ENCODE measurements at regions of chr2 and their contacts with region 1.

Region 1: GRCh38 chr2:112749755-112750559 is 14.5 kb downstream of the CKAP2L start:
- DNase-seq: peak in 1 of 2 donors; percentile 25
- ATAC-seq: no peak
- H3K4me3 ChIP-seq: no peak overlapping the region
- H3K27ac ChIP-seq: no peak overlapping the region
- H3K4me1 ChIP-seq: no peaks in the 10 kb centered on the region
- H3K27me3 ChIP-seq: no peaks in the 10 kb centered on the region
- CTCF ChIP-seq: peak; percentile 34 to 75 (median 50)
- POLR2A ChIP-seq: no peak

Region 2: GRCh38 chr2:112597537-112598322 is 152.2 kb before region 1 on chr2:
- in situ Hi-C with region 1: no loop called
- intact Hi-C with region 1: no loop called
- DNase-seq: no peak
- ATAC-seq: no peak
- H3K4me3 ChIP-seq: no peak overlapping the region
- H3K27ac ChIP-seq: no peak overlapping the region
- H3K4me1 ChIP-seq: peaks cover 0 to 3% of the 10 kb centered on the region in 2 donors
- H3K27me3 ChIP-seq: no peaks in the 10 kb centered on the region
- CTCF ChIP-seq: no peak
- POLR2A ChIP-seq: no peak

Region 3: DNA sequence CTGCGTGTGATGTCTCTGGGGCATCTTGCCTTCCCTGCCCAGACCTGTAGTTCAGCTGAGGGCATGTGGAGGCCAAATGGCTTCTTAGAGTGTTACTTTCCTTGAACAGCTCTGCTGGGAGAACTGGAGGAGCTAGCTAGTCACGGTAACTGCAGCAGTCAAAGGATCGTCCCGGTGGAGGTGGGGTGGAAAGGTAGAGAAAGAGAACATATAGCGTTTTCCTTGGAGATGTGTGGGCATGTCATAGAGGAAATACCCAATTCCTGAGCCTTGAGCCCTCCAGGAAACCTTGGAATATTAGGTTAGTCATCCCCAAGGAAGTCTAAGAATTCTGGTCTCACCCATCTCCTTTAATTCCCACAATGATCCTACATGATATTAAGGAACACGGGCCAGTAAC is 127.5 kb after region 1 on chr2:
- in situ Hi-C with region 1: loop called in 1 of 4 experiments (anchors 10 kb)
- intact Hi-C with region 1: no loop called
- DNase-seq: no peak
- ATAC-seq: no peak
- H3K4me3 ChIP-seq: no peak overlapping the region
- H3K27ac ChIP-seq: no peak overlapping the region
- H3K4me1 ChIP-seq: no peaks in the 10 kb centered on the region
- H3K27me3 ChIP-seq: peaks cover 0 to 6% (median 0%) of the 10 kb centered on the region in 3 donors
- CTCF ChIP-seq: no peak
- POLR2A ChIP-seq: no peak

Region 4: DNA sequence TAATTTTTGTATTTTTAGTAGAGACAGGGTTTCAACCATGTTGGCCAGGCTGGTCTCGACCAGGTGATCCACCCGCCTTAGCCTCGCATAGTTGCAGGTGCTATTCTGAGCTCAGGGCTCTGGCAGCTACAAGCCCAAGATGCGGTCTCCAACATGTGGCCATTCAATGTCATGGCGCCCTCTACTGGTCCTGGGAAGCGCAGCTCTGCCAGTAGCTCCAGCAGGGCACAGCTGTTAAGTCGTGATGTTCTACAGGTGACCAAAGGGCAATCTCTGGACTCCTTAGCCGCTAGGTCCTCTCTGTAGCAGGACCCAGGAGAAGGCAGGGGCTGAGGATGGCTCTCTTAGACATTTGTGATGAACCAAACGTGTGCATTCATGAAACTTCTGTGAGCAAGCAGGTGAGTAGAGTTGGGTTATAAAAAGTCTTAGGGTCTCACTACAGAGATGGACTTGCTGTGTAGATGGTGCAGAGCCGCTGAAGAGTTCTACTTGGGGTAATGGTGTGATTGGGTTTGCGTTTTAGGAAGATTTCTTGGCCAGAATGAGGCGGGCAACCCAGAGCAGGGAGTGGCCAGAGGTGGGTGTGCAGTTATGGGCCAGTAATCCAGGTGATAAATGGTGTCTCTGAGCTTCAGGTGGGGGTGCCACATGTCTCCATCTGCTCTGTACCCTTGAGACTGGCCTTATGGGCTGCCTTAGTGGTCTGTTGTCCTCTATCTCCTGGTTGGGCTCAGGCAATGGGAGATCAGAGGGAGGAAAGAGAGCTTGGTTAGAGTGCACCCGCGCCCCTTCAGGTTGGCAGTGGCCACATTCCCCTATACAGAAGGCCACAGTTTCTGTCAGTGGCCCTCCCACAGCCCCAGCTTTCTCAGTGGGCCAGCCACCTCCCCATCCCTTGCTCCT is 192.0 kb after region 1 on chr2:
- in situ Hi-C with region 1: no loop called
- intact Hi-C with region 1: loop called (anchors 5 kb)
- DNase-seq: no peak
- ATAC-seq: no peak
- H3K4me3 ChIP-seq: no peak overlapping the region
- H3K27ac ChIP-seq: no peak overlapping the region
- H3K4me1 ChIP-seq: no peaks in the 10 kb centered on the region
- H3K27me3 ChIP-seq: no peaks in the 10 kb centered on the region
- CTCF ChIP-seq: peak in 2 of 5 experiments; percentile 39 to 55
- POLR2A ChIP-seq: no peak

Region 5: GRCh38 chr2:112958428-112959108 is 208.6 kb after region 1 on chr2:
- in situ Hi-C with region 1: loop called in 1 of 4 experiments (anchors 10 kb)
- intact Hi-C with region 1: no loop called
- DNase-seq: no peak
- ATAC-seq: no peak
- H3K4me3 ChIP-seq: no peak overlapping the region
- H3K27ac ChIP-seq: no peak overlapping the region
- H3K4me1 ChIP-seq: no peaks in the 10 kb centered on the region
- H3K27me3 ChIP-seq: no peaks in the 10 kb centered on the region
- CTCF ChIP-seq: peak in 3 of 5 experiments; percentile 35 to 53 (median 47)
- POLR2A ChIP-seq: no peak

Region 6: DNA sequence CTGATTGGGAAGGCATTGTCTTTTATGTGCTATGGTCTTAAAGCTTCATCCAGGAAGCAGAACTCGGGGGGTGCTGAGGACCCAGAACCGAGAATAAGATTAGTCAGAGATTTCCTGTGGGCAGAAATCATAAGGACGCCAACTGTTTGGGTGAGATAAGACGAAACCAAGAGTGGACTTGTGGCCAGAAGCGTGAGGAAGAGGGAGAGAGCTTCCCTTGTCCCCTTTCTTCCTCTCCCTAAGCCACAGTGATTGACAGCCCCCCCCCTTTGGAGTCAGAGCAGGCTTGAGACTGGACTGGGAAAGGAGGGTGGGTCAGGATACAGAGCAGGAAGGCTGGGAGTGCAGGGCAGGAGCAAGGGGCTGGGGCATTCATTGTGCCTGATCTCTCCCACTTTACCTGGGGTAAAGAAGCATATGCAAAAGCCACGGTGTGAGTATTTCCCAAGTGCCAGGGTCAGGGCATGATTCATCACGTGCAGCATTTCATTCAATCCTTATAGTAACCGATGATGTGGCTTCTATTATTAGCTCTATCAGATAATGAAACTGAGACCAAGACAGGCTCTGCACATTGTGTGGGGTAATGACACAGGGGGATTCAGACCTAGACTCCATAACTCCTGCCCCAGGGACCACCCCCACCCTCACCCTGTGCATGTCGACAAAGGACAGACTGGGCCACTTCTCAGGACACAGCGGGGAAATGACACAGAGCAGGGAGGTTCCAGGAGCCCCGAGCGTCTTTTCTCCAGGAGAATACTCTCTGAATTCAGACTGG is 374.4 kb after region 1 on chr2:
- in situ Hi-C with region 1: no loop called
- intact Hi-C with region 1: no loop called
- DNase-seq: no peak
- ATAC-seq: peak; percentile 65 to 84
- H3K4me3 ChIP-seq: no peak overlapping the region
- H3K27ac ChIP-seq: no peak overlapping the region
- H3K4me1 ChIP-seq: no peaks in the 10 kb centered on the region
- H3K27me3 ChIP-seq: no peaks in the 10 kb centered on the region
- CTCF ChIP-seq: no peak
- POLR2A ChIP-seq: no peak